ENCODE measurements at regions of chr1 and their contacts with region 1.

Region 1: DNA sequence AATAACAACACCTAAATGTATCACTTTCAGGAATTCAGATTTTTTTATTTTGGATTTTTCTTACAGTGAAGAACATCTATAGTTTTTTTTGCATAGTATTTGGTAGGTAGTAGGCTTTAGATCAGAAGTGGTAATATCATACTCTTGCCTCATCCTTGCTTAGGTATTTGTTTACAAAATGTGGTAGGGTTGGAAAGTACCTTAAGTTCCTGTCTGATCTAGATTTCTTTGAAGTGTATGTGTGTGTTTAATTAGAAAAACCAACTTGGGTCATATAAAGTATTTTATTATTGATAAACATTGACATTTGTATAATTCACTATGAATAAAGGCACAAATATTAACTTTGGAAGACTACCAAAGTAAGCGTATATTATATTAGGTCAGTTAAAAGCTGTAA is 85.3 kb upstream of the GPR88 start:
- DNase-seq: no peak
- H3K4me3 ChIP-seq: no peak overlapping the region
- H3K27ac ChIP-seq: no peak overlapping the region
- H3K4me1 ChIP-seq: no peaks in the 10 kb centered on the region
- H3K27me3 ChIP-seq: no peaks in the 10 kb centered on the region
- CTCF ChIP-seq: no peak
- POLR2A ChIP-seq: no peak

Region 2: GRCh38 chr1:99808391-99809115 is 644.1 kb before region 1 on chr1:
- intact Hi-C with region 1: loop called (anchors 5 kb)
- DNase-seq: peak in 1 of 2 donors; percentile 5
- H3K4me3 ChIP-seq: no peak overlapping the region
- H3K27ac ChIP-seq: peak overlapping the region in 2 of 3 donors; percentile 59 to 60
- H3K4me1 ChIP-seq: no peaks in the 10 kb centered on the region
- H3K27me3 ChIP-seq: no peaks in the 10 kb centered on the region
- CTCF ChIP-seq: peak in 5 of 6 experiments; percentile 37 to 84 (median 71)
- POLR2A ChIP-seq: no peak

Region 3: DNA sequence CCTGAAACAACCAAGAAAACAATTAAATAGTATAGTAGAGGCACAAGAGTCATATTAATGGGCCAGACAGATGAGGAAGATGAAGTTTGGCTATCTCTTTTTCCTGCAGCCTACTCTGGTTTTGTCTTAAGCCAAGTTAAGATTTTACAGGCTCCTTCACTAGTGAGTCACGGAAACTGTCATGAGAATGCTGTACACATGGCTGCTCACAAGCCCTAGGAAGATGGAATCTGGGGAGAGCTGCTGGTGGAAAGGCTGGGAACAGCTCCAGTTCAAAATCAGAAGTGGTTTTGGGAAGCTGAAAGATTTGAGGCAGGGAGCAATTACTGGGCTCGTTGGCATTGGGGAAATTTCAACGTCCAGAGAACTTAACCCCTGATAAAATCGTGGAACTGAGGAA is 737.8 kb after region 1 on chr1:
- intact Hi-C with region 1: no loop called
- DNase-seq: peak; percentile 21 to 49
- H3K4me3 ChIP-seq: no peak overlapping the region
- H3K27ac ChIP-seq: no peak overlapping the region
- H3K4me1 ChIP-seq: no peaks in the 10 kb centered on the region
- H3K27me3 ChIP-seq: no peaks in the 10 kb centered on the region
- CTCF ChIP-seq: no peak
- POLR2A ChIP-seq: no peak